ENCODE measurements at regions of chr11 and their contacts with region 1.

Region 1: GRCh38 chr11:115659061-115659963 is 155.1 kb upstream of the CADM1 start:
- H3K4me3 Mint-ChIP-seq: peak overlapping the region; percentile 47
- H3K27ac Mint-ChIP-seq: no peak overlapping the region
- H3K4me1 Mint-ChIP-seq: peaks cover 18% of the 10 kb centered on the region
- H3K27me3 Mint-ChIP-seq: peaks cover 83% of the 10 kb centered on the region

Region 2: DNA sequence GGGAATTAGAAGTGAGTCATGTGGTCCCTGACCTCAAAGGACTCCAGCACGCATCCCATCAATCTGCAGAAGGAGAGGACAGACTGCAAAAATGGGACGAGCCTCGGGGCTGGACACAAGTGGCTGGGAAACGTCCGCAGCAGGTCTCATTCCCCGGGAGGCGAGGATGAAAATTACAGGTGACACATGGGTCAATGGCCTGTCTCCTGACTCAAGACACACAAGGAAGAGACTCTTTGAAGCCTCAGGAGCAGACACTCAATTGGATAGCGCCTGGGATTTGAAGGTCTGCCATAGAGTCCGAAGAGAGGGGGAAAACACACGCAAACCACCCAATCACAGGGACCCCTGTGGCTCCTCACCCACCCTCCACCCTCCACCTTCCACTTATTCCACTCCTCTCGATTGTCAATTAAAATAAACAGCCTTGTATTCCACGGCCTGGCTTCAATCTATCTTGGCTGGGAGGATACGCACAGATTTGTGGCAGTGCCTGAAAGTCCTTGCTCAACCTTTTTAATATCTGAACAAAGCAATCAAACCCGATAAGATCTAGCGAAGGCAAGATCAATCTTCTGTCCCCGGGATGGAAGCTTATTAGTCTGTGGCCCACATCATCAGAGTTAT is 53.3 kb before region 1 on chr11:
- intact Hi-C with region 1: no loop called
- H3K4me3 Mint-ChIP-seq: no peak overlapping the region
- H3K27ac Mint-ChIP-seq: no peak overlapping the region
- H3K4me1 Mint-ChIP-seq: no peaks in the 10 kb centered on the region
- H3K27me3 Mint-ChIP-seq: peaks cover 25% of the 10 kb centered on the region

Region 3: DNA sequence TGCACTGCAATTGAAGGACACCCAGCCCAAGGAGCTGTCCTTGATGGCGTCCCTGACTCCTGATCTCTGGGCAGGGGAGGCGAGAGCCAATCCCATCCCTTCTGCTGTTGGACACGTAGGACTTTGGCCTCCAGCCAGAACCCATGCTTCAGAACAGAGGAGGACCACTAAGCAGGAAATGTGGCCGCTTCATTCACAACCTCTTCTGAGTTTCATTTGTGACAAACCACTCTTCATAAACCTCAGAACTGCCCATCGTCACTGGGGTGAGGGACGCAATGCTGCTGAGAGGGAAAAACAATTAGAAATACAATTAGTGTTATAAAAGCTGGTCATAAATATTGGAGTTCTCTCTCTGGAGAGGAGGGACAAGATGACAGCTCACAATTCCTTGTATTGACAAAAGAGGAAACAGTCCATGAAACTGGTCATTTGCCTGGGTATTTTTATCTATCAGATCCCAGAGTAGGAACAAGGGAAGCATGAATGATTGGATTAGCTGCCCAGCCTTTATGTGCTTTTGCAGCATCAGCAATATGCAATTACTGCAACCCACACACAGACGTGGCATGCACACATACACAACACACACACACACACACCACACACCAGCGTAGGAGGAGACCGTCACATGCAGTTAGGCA is 61.4 kb after region 1 on chr11:
- intact Hi-C with region 1: loop called (anchors 10 kb)
- H3K4me3 Mint-ChIP-seq: no peak overlapping the region
- H3K27ac Mint-ChIP-seq: no peak overlapping the region
- H3K4me1 Mint-ChIP-seq: peaks cover 35% of the 10 kb centered on the region
- H3K27me3 Mint-ChIP-seq: peaks cover 32% of the 10 kb centered on the region

Region 4: GRCh38 chr11:115941481-115941993 is 282.2 kb after region 1 on chr11:
- intact Hi-C with region 1: no loop called
- H3K4me3 Mint-ChIP-seq: no peak overlapping the region
- H3K27ac Mint-ChIP-seq: no peak overlapping the region
- H3K4me1 Mint-ChIP-seq: peaks cover 9% of the 10 kb centered on the region
- H3K27me3 Mint-ChIP-seq: peaks cover 32% of the 10 kb centered on the region